ENCODE measurements at regions of chr16 and their contacts with region 1.

Region 1: GRCh38 chr16:31168848-31169247 is 11.1 kb upstream of the FUS start:
- DNase-seq: no peak
- H3K4me3 Mint-ChIP-seq: no peak overlapping the region
- H3K27ac Mint-ChIP-seq: no peak overlapping the region
- H3K4me1 Mint-ChIP-seq: peaks cover 8% of the 10 kb centered on the region
- H3K27me3 Mint-ChIP-seq: no peaks in the 10 kb centered on the region
- CTCF ChIP-seq: no peak

Region 2: DNA sequence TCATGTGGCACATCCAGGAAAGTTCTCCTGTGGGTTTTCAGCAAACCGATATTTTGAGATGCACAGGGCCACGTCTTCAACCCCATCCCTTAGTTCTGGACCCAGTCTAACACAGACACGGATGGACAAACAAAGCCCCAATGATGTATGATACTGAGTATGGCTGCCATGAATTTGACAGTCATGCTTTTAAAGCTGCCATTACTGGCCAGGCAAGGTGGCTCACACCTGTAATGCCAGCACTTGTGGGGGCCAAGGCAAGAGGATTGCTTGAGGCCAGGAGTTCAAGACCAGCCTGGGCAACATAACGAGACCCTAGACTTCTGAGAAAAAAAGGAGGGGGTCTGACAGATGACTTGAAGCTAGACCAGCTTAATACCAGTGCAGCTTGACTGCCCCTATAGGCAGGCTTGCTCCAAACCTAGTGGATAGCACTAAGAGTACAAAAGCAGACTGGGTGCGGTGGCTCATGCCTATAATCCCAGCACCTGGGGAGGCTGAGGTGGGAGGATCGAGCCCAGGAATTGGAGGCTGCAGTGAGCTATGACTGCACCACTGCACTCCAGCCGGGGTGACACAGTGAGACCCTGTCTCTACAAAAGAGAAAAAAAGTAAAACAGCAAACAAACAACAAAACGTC is 371.1 kb before region 1 on chr16:
- CTCF ChIA-PET with region 1: interaction called, 10 read pairs
- intact Hi-C with region 1: no loop called
- DNase-seq: no peak
- H3K4me3 Mint-ChIP-seq: no peak overlapping the region
- H3K27ac Mint-ChIP-seq: no peak overlapping the region
- H3K4me1 Mint-ChIP-seq: no peaks in the 10 kb centered on the region
- H3K27me3 Mint-ChIP-seq: peaks cover 16% of the 10 kb centered on the region
- CTCF ChIP-seq: no peak

Region 3: DNA sequence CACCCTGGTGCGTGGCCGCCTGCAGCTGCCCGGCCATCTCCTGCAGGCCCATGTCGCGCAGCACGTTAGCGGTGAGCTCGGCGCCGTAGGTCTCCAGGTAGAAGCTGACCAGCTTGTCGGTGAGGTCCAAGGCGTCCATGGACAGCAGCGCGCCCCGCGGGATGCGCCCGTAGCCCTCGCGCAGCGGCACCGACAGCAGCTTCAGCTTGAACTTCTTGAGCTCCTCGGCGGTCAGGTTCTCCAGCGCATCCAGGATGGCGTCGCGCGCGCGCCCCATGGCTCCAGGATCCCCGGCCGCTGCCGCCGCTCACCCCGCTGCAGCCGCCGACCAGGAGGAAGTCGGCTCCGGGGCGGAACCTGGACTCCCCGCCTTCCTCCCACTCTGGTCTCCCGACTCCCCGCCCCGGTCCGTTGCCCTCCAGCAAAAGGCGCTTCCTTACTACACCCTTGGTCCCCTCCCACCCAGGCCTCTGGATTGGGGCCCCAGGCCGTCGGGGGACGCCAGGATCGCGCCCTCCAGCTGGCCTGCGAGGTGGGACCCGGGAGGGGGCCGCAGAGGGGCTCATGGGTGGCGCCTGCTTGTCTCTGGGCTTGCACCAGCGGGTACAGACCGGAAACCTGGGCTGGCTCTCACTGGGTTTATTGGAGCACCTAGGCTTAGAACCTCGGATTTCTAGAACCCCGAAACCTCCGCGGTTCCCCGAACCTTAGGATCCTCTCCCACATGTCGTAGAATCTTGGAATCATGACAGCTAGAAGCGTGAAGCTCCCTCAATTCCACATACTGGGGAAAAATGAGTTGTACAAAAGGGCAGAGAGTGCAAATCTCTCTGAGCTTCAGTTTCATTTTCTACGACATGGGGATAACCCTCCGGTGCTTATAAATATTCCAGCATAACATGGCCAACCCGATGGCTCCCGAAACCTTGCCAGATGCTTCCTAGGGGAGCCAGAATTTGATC is 33.8 kb after region 1 on chr16 and contains the start of gene PYCARD:
- CTCF ChIA-PET with region 1: no interaction called
- intact Hi-C with region 1: no loop called
- DNase-seq: peak; percentile 56
- H3K4me3 Mint-ChIP-seq: peak within 1 kb of the TSS; percentile 84
- H3K27ac Mint-ChIP-seq: peak within 1 kb of the TSS; percentile 54
- H3K4me1 Mint-ChIP-seq: peaks cover 26% of the 10 kb centered on the region
- H3K27me3 Mint-ChIP-seq: peaks cover 39% of the 10 kb centered on the region
- CTCF ChIP-seq: no peak
- total RNA-seq, gene PYCARD: 24.3 and 30.9 TPM in 2 replicates

Region 4: DNA sequence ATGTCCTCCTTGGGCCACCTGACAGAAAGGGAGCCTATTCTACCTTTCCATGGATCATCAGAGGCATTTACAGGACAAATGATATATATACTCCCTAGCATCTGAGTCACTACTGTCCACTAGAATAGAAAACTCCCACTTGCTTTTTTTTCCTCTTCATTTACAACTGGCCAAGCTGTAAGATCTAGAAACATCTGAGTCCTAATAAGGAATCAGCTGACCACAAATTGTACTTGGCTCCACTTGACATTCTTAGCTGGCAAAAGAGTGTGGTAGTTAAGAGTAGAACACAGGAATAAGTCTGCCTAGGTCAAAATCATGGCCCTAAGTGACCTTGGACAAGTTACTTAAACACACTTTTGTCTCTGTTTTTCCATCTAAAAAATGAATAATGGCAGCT is 334.1 kb after region 1 on chr16:
- CTCF ChIA-PET with region 1: no interaction called
- intact Hi-C with region 1: no loop called
- DNase-seq: no peak
- H3K4me3 Mint-ChIP-seq: no peak overlapping the region
- H3K27ac Mint-ChIP-seq: no peak overlapping the region
- H3K4me1 Mint-ChIP-seq: no peaks in the 10 kb centered on the region
- H3K27me3 Mint-ChIP-seq: no peaks in the 10 kb centered on the region
- CTCF ChIP-seq: no peak